HCT116 (cell line): ENCODE measurements at regions of chr14 and their contacts with region 1.

Region 1: DNA sequence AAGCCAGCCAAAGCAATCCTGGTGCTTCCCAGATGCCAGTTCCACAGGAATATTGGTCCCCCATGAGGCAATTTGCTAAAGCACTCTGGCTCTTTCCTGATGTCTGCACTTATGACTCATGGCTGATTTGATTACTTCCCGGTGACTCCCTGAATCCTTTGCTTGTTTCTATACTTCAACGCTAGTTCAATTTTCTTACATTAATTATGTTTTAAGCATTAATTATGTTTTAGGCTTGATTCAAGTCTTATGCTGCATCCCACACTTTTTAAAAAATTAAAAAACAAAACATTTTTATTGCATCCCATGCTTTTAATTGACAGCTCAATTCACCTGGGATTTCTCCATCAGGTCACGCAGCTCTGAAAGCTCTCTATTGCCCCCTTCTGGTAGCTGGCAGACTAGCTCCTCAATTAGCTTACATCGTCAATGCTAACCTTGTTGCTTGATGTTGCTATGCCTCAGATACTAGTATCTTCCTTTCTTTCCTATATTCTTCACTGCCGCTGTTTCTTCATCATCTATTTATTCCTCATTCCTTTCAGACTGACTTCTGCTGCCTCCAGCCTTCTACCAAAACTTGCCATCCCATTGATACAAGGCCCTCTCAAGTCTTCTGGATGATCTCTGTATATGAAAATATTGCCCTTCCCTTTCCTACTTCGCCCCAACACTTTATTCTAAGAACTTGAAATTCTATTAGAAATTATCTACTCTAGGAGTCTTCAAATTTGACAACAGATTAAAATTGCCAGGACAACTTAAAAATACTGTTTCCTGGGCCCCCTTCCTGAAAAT is 32.0 kb downstream of the TSHR start:
- DNase-seq: peak; percentile 76
- ATAC-seq: peak; percentile 96
- H3K4me3 ChIP-seq: no peak overlapping the region
- H3K27ac ChIP-seq: no peak overlapping the region
- H3K4me1 ChIP-seq: peaks cover 0 to 10% of the 10 kb centered on the region in 2 experiments; a peak in 2 of 4 replicates
- H3K27me3 ChIP-seq: 0 out of 2 replicates have a peak, but pooled peaks cover 17% of the 10 kb centered on the region
- CTCF ChIP-seq: peak; percentile 70 to 94 (median 89); a peak in 5 of 6 replicates
- POLR2A ChIP-seq: no peak
- RAD21 ChIP-seq: peak; percentile 77

Region 2: DNA sequence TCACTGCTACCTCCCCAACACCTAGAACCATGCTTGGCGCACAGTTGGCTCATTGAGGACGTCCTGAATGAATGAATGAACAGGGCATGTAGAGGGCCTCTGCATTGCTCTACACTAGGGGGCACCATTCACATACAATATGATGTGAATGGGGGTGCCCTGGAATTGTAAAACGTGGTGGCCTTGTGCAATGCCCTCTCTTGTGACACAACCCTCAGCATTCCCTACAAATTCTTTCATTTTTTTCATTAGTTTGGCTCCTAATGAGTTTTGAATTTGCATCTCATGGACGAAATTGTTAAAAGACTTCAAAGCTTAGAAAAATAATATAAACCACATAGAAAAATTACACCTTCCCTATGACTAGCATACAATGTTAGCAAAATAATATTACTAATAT is 773.8 kb before region 1 on chr14:
- CTCF ChIA-PET with region 1: no interaction called
- POLR2A ChIA-PET with region 1: no interaction called
- RAD21 ChIA-PET with region 1: no interaction called
- intact Hi-C with region 1: loop called (anchors 1 kb)
- DNase-seq: peak; percentile 16
- ATAC-seq: peak; percentile 87
- H3K4me3 ChIP-seq: no peak overlapping the region
- H3K27ac ChIP-seq: no peak overlapping the region
- H3K4me1 ChIP-seq: no peaks in the 10 kb centered on the region
- H3K27me3 ChIP-seq: no peaks in the 10 kb centered on the region
- CTCF ChIP-seq: peak; percentile 30 to 75 (median 64); a peak in 5 of 6 replicates
- POLR2A ChIP-seq: no peak
- RAD21 ChIP-seq: peak; percentile 64

Region 3: GRCh38 chr14:80930836-80931389 is 56.5 kb before region 1 on chr14:
- CTCF ChIA-PET with region 1: no interaction called
- POLR2A ChIA-PET with region 1: no interaction called
- RAD21 ChIA-PET with region 1: no interaction called
- intact Hi-C with region 1: no loop called
- DNase-seq: no peak
- ATAC-seq: no peak
- H3K4me3 ChIP-seq: no peak overlapping the region
- H3K27ac ChIP-seq: no peak overlapping the region
- H3K4me1 ChIP-seq: peaks cover 4 to 9% of the 10 kb centered on the region in 2 experiments; a peak in 3 of 4 replicates
- H3K27me3 ChIP-seq: no peaks in the 10 kb centered on the region
- CTCF ChIP-seq: no peak
- POLR2A ChIP-seq: no peak
- RAD21 ChIP-seq: no peak

Region 4: DNA sequence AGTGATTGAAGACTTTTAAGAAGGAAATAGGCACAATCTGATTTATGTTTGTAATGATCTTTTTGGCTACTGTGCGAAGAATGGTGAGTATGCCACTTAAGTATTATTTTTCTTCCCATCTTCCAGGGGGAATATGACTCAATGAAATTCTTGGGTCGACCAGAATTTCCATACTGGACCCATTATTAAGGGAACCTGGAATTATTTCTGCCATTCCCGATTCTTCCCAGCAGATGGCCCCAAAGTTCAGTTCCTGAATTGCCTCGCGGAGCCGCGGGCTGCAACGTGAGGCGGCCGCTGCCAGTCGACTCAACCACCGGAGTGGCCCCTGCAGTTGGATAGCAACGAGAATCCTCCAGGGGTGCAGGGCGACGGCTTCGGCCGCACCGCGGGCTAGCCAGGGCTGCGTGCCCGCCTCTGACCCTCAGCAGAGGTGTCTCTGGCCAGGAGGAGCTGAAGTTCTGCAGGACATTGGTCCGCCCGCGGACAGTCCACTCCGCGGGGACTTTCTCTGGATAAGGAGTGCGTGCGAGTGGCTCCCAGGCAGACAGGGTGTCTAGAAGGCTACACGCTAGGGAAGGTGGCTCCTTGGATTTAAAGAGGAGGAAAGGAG is 32.6 kb before region 1 on chr14:
- CTCF ChIA-PET with region 1: interaction called, 7 read pairs
- POLR2A ChIA-PET with region 1: no interaction called
- RAD21 ChIA-PET with region 1: no interaction called
- intact Hi-C with region 1: loop called (anchors 1 kb)
- DNase-seq: peak; percentile 51
- ATAC-seq: peak; percentile 94
- H3K4me3 ChIP-seq: peak overlapping the region; percentile 31 to 55
- H3K27ac ChIP-seq: no peak overlapping the region
- H3K4me1 ChIP-seq: peaks cover 0 to 4% of the 10 kb centered on the region in 2 experiments; a peak in 1 of 4 replicates
- H3K27me3 ChIP-seq: no peaks in the 10 kb centered on the region
- CTCF ChIP-seq: peak; percentile 67 to 78 (median 71)
- POLR2A ChIP-seq: no peak
- RAD21 ChIP-seq: peak; percentile 86

Region 5: DNA sequence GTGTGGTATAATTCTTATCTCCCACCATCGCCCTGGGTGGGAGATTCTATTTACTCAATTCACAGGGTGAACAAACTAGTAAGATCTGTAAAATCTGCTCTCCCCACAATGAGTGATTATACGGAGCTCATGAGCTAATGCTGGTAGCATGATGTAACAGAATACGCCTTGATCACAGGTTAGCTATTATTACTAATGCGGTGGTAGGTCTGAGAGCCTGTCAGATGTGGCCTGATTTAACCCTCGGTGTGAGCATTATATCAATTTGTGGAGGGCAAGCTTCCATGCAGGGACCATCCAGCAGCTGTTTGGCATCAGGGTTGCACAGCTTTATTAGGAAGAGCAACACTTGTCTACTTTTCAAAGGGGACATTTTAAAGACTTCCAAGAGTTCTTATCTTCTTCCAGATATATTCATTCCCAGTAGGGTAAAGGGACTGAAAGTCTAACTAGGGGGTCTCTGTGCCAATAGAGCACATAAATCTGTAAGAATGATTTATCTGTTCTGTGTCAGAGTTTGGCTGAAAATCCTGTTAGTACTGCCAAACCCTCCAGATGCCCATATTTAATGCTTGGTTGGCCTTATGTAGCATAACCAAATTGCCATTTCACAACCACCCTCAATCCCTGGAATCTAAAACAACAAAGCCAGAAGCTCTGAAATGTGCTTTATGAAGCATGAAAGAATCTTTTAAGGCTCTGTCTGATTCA is 13.3 kb before region 1 on chr14:
- CTCF ChIA-PET with region 1: interaction called, 16 read pairs
- POLR2A ChIA-PET with region 1: no interaction called
- RAD21 ChIA-PET with region 1: no interaction called
- intact Hi-C with region 1: no loop called
- DNase-seq: no peak
- ATAC-seq: no peak
- H3K4me3 ChIP-seq: no peak overlapping the region
- H3K27ac ChIP-seq: no peak overlapping the region
- H3K4me1 ChIP-seq: no peaks in the 10 kb centered on the region
- H3K27me3 ChIP-seq: peaks cover 14% of the 10 kb centered on the region; the same call in 1 of the 2 replicates
- CTCF ChIP-seq: no peak
- POLR2A ChIP-seq: no peak
- RAD21 ChIP-seq: no peak

Region 6: DNA sequence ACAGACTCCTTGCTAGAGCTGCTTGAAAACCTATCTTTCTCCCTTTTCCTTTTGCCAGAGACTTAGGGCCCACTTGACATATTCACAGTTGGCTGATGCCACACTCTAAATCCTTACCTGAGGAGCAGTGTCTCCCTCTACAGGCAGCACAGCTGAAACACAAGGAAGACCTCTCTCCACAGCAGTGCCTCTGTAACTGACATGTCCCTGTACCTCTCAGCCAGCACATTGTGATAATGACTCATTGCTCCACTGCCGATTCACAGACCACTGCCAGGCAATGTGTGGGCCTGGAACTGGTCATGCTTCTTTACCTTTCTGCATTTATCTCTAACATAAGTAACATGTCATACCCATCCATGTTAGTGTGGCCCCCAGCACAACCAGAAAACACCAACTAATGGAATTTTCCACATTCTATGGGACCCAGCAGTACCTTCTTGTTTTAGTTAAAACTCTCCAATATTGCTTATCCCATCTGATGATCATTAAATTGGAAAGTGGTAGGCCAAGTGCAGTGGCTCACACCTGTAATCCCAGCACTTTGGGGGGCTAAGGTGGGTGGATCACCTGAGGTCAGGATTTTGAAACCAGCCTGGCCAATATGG is 176.8 kb after region 1 on chr14:
- CTCF ChIA-PET with region 1: interaction called, 12 read pairs
- POLR2A ChIA-PET with region 1: no interaction called
- RAD21 ChIA-PET with region 1: no interaction called
- intact Hi-C with region 1: no loop called
- DNase-seq: peak; percentile 83
- ATAC-seq: peak; percentile 99
- H3K4me3 ChIP-seq: no peak overlapping the region
- H3K27ac ChIP-seq: no peak overlapping the region
- H3K4me1 ChIP-seq: peaks cover 0 to 19% of the 10 kb centered on the region in 2 experiments; a peak in 3 of 4 replicates
- H3K27me3 ChIP-seq: no peaks in the 10 kb centered on the region
- CTCF ChIP-seq: peak; percentile 51 to 89 (median 85); a peak in 5 of 6 replicates
- POLR2A ChIP-seq: no peak
- RAD21 ChIP-seq: peak; percentile 78

Region 7: GRCh38 chr14:81447021-81447764 is 459.8 kb after region 1 on chr14:
- CTCF ChIA-PET with region 1: no interaction called
- POLR2A ChIA-PET with region 1: no interaction called
- RAD21 ChIA-PET with region 1: no interaction called
- intact Hi-C with region 1: no loop called
- DNase-seq: no peak
- ATAC-seq: no peak
- H3K4me3 ChIP-seq: no peak overlapping the region
- H3K27ac ChIP-seq: no peak overlapping the region
- H3K4me1 ChIP-seq: no peaks in the 10 kb centered on the region
- H3K27me3 ChIP-seq: peaks cover 12% of the 10 kb centered on the region; the same call in 1 of the 2 replicates
- CTCF ChIP-seq: no peak
- POLR2A ChIP-seq: no peak
- RAD21 ChIP-seq: no peak

Region 8: GRCh38 chr14:81464247-81465002 is 477.0 kb after region 1 on chr14:
- CTCF ChIA-PET with region 1: interaction called, 3 read pairs
- POLR2A ChIA-PET with region 1: no interaction called
- RAD21 ChIA-PET with region 1: no interaction called
- intact Hi-C with region 1: loop called (anchors 2 kb)
- DNase-seq: peak; percentile 40
- ATAC-seq: peak; percentile 67
- H3K4me3 ChIP-seq: peak overlapping the region; percentile 32 to 49
- H3K27ac ChIP-seq: no peak overlapping the region
- H3K4me1 ChIP-seq: peaks cover 0 to 16% of the 10 kb centered on the region in 2 experiments; a peak in 3 of 4 replicates
- H3K27me3 ChIP-seq: no peaks in the 10 kb centered on the region
- CTCF ChIP-seq: peak; percentile 67 to 95 (median 76)
- POLR2A ChIP-seq: no peak
- RAD21 ChIP-seq: peak; percentile 82